ENCODE measurements at regions of chr17 and their contacts with region 1.

Region 1: GRCh38 chr17:31437720-31438420 is 46.4 kb downstream of the RAB11FIP4 start:
- DNase-seq: no peak
- H3K4me3 ChIP-seq: no peak overlapping the region
- H3K27ac ChIP-seq: no peak overlapping the region
- H3K4me1 ChIP-seq: peaks cover 0 to 5% (median 0%) of the 10 kb centered on the region in 4 donors
- H3K27me3 ChIP-seq: no peaks in the 10 kb centered on the region
- CTCF ChIP-seq: no peak
- EP300 ChIP-seq: no peak
- POLR2A ChIP-seq: no peak

Region 2: DNA sequence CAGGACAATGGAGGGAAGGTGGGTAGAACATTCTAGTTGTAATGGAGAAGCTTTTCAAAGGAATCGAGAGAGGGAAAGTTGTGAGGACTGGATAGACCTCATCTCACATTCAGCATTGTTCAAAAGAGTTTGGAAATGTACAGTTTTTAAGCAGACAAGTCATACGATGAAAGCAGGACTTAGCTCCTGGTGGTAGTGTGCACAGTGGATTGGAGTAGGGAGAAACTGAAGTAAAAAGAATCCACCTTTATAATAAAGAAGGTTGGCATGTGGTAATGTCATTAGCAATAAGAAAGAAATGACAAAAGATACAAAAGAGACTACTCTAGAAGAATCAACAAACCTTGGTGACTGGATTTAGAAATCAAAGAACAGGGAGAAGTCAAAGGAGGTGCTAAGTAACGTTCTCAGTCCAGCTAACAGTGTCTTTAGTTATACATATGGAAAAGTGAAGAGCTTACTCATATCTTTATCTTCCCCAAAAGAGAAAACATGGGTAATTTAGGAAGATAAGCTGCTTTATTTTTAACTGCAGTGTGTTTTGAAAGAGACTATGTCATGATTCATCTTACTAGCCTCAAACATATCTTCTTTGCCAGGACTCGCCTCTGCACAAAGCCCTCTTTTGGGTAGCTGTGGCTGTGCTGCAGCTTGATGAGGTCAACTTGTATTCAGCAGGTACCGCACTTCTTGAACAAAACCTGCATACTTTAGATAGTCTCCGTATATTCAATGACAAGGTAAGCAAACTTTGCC is 97.8 kb before region 1 on chr17:
- intact Hi-C with region 1: no loop called
- DNase-seq: no peak
- H3K4me3 ChIP-seq: no peak overlapping the region
- H3K27ac ChIP-seq: no peak overlapping the region
- H3K4me1 ChIP-seq: no peaks in the 10 kb centered on the region
- H3K27me3 ChIP-seq: no peaks in the 10 kb centered on the region
- CTCF ChIP-seq: no peak
- EP300 ChIP-seq: no peak
- POLR2A ChIP-seq: no peak

Region 3: DNA sequence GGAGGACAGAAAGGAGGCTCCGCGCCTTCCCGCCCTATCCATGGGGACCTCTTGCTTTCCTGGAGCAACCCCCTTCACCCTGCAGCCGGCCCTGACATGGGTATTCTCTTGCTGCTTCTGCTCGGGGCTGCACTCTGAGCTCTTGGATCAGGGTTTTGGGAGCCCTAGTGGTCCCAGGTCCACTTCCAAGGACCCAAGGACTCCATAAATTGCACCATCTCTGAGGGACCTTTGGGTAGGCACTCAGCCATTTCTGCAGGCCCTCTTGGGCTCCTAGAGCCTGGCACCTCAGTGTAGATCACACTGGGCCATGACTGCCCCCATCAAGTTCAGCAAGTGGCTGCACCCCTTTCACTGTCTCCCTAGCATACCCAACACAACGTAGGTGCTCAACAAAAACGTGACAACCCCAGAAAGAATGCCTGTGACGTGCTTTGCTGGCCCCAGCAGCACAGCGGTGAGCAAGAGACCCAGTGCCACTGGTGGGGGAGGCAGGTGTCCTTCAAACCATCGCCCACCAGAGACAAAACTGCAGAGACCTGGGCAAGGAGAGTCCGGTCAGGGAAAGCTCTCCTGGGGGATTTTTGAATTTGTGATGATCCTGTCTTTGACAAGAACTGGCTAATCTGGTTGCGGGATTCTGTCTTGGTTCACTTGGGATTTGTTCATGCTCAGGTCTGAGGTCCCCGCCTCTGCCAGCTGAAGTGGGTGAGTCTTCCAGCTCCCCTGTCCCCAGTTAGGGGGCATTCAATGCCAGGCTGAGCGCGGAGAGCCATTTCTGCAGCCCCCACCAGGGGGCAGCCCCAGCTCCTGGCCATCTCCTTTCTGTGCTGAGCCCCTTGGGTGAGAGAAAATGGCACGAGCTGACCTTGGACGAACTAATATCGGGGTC is 48.9 kb before region 1 on chr17:
- intact Hi-C with region 1: no loop called
- DNase-seq: no peak
- H3K4me3 ChIP-seq: no peak overlapping the region
- H3K27ac ChIP-seq: no peak overlapping the region
- H3K4me1 ChIP-seq: peaks cover 0 to 16% (median 12%) of the 10 kb centered on the region in 4 donors
- H3K27me3 ChIP-seq: peaks cover 17 to 43% (median 42%) of the 10 kb centered on the region in 3 donors
- CTCF ChIP-seq: peak; percentile 17 to 40 (median 27)
- EP300 ChIP-seq: no peak
- POLR2A ChIP-seq: no peak

Region 4: GRCh38 chr17:31404028-31404954 is 33.6 kb before region 1 on chr17:
- intact Hi-C with region 1: no loop called
- DNase-seq: no peak
- H3K4me3 ChIP-seq: no peak overlapping the region
- H3K27ac ChIP-seq: no peak overlapping the region
- H3K4me1 ChIP-seq: no peaks in the 10 kb centered on the region
- H3K27me3 ChIP-seq: no peaks in the 10 kb centered on the region
- CTCF ChIP-seq: no peak
- EP300 ChIP-seq: no peak
- POLR2A ChIP-seq: no peak

Region 5: GRCh38 chr17:31524926-31525800 is 87.3 kb after region 1 on chr17:
- intact Hi-C with region 1: loop called (anchors 1 kb)
- DNase-seq: peak; percentile 88
- H3K4me3 ChIP-seq: no peak overlapping the region
- H3K27ac ChIP-seq: no peak overlapping the region
- H3K4me1 ChIP-seq: no peaks in the 10 kb centered on the region
- H3K27me3 ChIP-seq: no peaks in the 10 kb centered on the region
- CTCF ChIP-seq: peak; percentile 45 to 87 (median 81)
- EP300 ChIP-seq: no peak
- POLR2A ChIP-seq: no peak

Region 6: DNA sequence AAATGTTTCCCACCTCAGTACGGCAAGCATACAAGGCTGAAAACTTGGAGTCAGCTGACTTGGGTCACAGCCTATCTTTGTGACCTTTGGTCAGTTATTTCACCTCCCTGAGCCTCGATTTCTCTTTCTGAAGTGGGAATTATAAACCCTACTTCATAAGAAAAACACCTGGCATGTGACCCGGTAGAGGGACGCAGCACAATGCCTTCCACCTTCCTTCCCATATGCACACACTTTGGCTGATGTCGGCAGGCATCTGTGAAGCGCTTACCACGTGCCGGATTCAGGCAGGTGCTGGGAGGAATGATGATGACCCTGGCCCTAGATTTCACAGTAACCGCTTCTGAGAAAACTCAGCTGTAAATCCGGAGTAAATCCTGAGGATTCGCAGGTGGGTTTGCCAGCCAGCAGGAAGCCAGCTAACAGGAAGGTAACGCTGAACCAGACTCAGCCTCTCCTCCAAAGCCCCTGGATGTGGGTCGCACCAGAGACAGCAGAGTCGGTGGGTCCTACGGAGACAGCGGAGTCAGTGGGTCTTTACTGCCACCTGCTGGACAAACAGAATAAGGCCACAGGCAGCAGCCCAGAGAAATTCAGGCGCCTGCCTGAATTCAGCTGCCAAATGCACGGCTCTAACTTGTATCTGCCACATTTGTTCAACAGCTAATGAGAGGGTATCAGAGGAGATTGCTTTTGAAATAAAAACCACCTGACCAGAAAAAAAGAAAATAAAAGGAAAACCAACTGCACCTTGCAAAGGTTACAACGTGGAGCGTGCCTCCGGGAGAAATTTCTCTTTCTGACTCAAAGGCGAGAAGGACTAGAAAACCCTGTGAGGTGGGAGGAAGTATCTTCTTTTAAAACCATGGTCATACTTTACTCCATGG is 404.6 kb after region 1 on chr17:
- intact Hi-C with region 1: loop called (anchors 1 kb)
- DNase-seq: peak; percentile 86
- H3K4me3 ChIP-seq: peak overlapping the region in 3 of 4 donors; percentile 7 to 27 (median 19)
- H3K27ac ChIP-seq: peak overlapping the region; percentile 68 to 83 (median 72)
- H3K4me1 ChIP-seq: peaks cover 0 to 50% (median 41%) of the 10 kb centered on the region in 4 donors
- H3K27me3 ChIP-seq: no peaks in the 10 kb centered on the region
- CTCF ChIP-seq: peak; percentile 95 to 99 (median 98)
- EP300 ChIP-seq: no peak
- POLR2A ChIP-seq: no peak

Region 7: GRCh38 chr17:31858642-31859473 is 421.0 kb after region 1 on chr17 and contains the start of gene COPRS:
- intact Hi-C with region 1: loop called (anchors 1 kb)
- DNase-seq: peak; percentile 96
- H3K4me3 ChIP-seq: peak within 1 kb of the TSS; percentile 65 to 89 (median 77)
- H3K27ac ChIP-seq: peak within 1 kb of the TSS; percentile 84 to 92 (median 89)
- H3K4me1 ChIP-seq: peaks cover 0 to 38% (median 35%) of the 10 kb centered on the region in 4 donors
- H3K27me3 ChIP-seq: no peaks in the 10 kb centered on the region
- CTCF ChIP-seq: no peak
- EP300 ChIP-seq: no peak
- POLR2A ChIP-seq: no peak
- total RNA-seq, gene COPRS: 135 to 216 (median 170) TPM

Region 8: GRCh38 chr17:31900877-31901276 is 463.0 kb after region 1 on chr17:
- intact Hi-C with region 1: loop called (anchors 2 kb)
- DNase-seq: no peak
- H3K4me3 ChIP-seq: peak overlapping the region; percentile 67 to 76 (median 70)
- H3K27ac ChIP-seq: peak overlapping the region; percentile 65 to 80 (median 79)
- H3K4me1 ChIP-seq: peaks cover 0 to 21% (median 12%) of the 10 kb centered on the region in 4 donors
- H3K27me3 ChIP-seq: no peaks in the 10 kb centered on the region
- CTCF ChIP-seq: no peak
- EP300 ChIP-seq: no peak
- POLR2A ChIP-seq: no peak

Region 9: DNA sequence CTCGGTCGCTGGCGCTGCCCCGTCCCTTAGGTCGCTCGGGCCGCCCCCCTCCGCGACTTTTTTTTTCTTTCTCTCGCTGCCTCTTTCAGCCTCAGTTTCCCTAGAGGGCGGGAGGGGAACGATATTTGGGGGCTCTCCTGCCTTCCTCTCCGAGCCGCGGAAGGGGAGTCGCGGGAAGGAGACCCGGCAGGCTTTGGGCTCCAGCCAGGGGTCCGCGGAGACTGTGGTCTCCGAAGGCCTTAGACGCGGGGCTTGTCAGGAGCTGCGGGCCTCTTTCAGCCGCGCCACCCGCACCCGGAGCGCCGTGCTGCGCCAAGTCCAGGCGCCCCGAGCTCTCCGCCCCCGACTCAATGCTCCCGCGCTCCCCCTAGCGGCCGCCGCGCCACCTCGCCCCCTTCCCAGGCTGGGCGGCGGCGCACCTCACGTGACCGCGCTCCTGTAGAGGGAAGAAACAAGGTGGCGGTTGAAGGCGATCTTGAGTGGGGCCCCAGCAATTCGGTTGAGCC is 569.1 kb after region 1 on chr17 and contains the start of gene LRRC37B:
- intact Hi-C with region 1: loop called (anchors 2 kb)
- DNase-seq: peak; percentile 92
- H3K4me3 ChIP-seq: peak within 1 kb of the TSS; percentile 52 to 96 (median 78)
- H3K27ac ChIP-seq: peak within 1 kb of the TSS; percentile 78 to 93 (median 86)
- H3K4me1 ChIP-seq: peaks cover 0 to 26% (median 25%) of the 10 kb centered on the region in 4 donors
- H3K27me3 ChIP-seq: no peaks in the 10 kb centered on the region
- CTCF ChIP-seq: peak; percentile 80 to 94 (median 88)
- EP300 ChIP-seq: no peak
- POLR2A ChIP-seq: peak in 1 of 2 donors; percentile 13
- total RNA-seq, gene LRRC37B: 14.0 to 44.9 (median 17.6) TPM